Dendritic cell treated with granulocyte-macrophage colony-stimulating factor and Interleukin-4, amounts not matched to agents 40 ng/mL and 50 ng/mL, for 4 days (primary cell): ENCODE measurements at regions of chr10 and their contacts with region 1.

Region 1: DNA sequence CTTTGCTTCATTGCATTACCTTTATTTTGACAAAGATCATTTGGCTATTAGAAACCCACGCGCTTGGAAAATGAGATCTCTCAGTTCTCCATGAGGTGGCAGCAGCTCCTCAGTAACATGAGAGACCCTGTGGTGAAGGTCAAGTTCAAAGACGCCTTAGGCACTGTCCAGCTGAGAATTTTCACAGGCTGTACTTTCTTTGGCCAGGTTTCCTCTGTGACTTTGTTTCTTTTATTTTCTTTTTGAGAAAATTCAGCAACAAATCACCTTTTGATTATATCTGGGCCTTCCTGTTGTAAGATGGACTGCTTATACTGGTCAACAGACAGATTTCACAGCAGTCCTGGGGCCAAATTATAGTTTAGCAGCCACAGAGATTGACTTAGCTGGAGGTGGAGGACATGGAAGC is 54.5 kb downstream of the RAB18 start:
- H3K4me3 Mint-ChIP-seq: no peak overlapping the region
- H3K27ac Mint-ChIP-seq: no peak overlapping the region
- H3K4me1 Mint-ChIP-seq: no peaks in the 10 kb centered on the region
- H3K27me3 Mint-ChIP-seq: peaks cover 2% of the 10 kb centered on the region

Region 2: GRCh38 chr10:27661514-27662286 is 103.1 kb after region 1 on chr10:
- intact Hi-C with region 1: loop called (anchors 1 kb)
- H3K4me3 Mint-ChIP-seq: no peak overlapping the region
- H3K27ac Mint-ChIP-seq: peak overlapping the region; percentile 92
- H3K4me1 Mint-ChIP-seq: peaks cover 51% of the 10 kb centered on the region
- H3K27me3 Mint-ChIP-seq: no peaks in the 10 kb centered on the region

Region 3: DNA sequence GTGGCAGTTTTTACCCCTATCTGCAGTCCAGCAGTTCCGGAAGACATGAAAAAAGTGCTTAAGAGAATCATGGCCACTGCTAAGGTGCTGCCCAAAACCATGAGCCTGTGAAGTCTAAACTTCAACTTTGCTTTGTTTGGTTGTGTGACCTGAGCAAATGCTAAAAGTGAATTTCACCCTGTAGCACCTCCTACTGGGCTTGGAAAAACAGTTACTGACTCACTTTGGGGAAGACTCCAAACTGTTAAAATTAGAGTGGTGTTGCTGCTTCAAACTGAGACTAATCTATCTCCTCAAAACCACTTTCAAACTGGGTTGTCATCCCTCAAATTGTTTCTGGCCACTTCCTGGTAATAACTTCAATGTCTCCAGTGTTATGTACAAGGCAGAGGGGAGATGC is 165.7 kb after region 1 on chr10:
- intact Hi-C with region 1: loop called (anchors 10 kb)
- H3K4me3 Mint-ChIP-seq: no peak overlapping the region
- H3K27ac Mint-ChIP-seq: no peak overlapping the region
- H3K4me1 Mint-ChIP-seq: no peaks in the 10 kb centered on the region
- H3K27me3 Mint-ChIP-seq: peaks cover 4% of the 10 kb centered on the region

Region 4: GRCh38 chr10:28393966-28394568 is 835.5 kb after region 1 on chr10:
- intact Hi-C with region 1: loop called (anchors 10 kb)
- H3K4me3 Mint-ChIP-seq: no peak overlapping the region
- H3K27ac Mint-ChIP-seq: no peak overlapping the region
- H3K4me1 Mint-ChIP-seq: peaks cover 26% of the 10 kb centered on the region
- H3K27me3 Mint-ChIP-seq: no peaks in the 10 kb centered on the region